ENCODE measurements at regions of chr7 and their contacts with region 1.

Region 1: DNA sequence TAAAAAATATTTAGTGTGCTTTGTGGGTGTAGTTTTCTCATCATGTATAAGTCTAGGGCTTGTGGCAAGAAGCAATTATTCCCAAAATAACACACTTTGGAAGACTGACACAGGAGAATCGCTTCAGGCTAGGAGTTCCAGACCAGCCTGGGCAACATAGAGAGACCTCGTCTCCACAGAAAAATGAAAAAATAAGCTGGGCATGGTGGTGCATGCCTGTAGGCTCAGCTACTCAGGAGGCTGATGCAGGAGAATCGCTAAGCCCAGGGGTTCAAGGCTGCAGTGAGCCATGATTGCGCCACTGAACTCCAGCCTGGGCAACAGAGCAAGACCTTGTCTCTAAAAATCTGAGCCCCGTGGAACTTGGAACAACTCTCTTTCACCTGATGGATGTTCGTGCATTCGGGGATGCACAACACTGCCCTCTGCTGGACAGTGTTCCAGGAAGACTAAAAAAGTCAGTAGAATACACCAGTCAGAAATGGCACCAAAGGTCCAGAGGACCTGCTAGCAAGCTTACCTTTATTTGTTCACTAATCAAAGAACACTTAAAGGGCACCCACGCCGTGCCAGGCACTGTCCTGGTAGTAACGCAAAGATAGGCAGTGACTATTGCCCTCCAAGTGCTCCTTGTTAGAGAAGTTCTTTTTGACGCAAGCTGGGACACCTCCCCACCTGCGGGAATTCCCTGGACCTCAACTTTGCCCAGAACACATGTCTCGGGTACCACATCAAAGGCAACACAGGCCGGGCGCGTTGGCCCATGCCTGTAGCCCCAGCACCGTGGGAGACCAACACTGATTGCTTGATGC is 81.9 kb upstream of the CALN1 start:
- DNase-seq: peak in 7 of 9 donors; percentile 13 to 48 (median 27)
- ATAC-seq: peak; percentile 57
- H3K4me3 ChIP-seq: no peak overlapping the region
- H3K4me3 Mint-ChIP-seq: no peak overlapping the region
- H3K27ac ChIP-seq: no peak overlapping the region
- H3K27ac Mint-ChIP-seq: no peak overlapping the region
- H3K4me1 ChIP-seq: no peaks in the 10 kb centered on the region
- H3K4me1 Mint-ChIP-seq: peaks cover 0 to 2% (median 0%) of the 10 kb centered on the region in 7 donors
- H3K27me3 ChIP-seq: no peaks in the 10 kb centered on the region
- H3K27me3 Mint-ChIP-seq: peaks cover 0 to 11% (median 4%) of the 10 kb centered on the region in 5 donors

Region 2: DNA sequence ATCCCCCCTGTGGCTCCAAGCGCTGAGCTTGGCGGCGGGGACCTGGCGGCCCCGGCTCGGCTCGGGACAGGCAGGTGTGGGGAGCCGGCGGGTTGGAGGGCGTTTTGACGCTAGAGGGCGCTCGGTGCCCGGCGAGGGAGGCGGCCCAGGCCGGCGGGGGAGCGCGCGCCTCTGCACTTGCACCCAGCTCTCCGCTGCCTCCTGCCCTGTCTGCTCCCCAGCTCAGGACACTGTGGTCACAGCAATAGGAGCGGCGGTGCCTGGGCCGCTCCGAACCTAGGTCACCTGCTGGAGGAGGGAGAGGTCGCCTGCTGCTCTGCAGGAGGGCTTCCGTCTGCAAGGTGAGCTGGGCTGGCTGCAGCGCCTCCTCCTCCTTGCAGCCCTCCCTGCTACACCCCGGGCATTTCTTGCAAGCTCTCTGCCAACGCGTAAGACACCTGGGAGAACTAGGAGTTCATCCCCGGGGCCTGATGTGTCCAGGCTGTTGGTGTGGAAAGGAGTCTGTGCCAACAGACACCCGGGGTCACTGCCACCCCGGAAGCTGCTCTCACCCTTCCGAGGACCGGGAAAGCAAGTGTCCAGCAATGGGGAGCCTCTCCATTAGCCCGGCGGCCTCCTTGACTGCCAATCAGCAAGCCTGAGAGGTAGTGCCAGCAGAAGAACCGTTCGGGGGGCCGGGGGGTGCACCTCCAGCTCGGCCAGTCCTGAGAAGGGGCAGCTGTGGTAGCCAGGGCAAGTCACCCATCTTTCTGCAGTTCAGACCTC is 741.7 kb before region 1 on chr7:
- CTCF ChIA-PET with region 1: no interaction called
- POLR2A ChIA-PET with region 1: no interaction called
- intact Hi-C with region 1: loop called in 1 of 2 experiments (anchors 5 kb)
- DNase-seq: peak in 5 of 9 donors; percentile 15 to 50 (median 23)
- ATAC-seq: peak; percentile 48
- H3K4me3 ChIP-seq: no peak overlapping the region
- H3K4me3 Mint-ChIP-seq: no peak overlapping the region
- H3K27ac ChIP-seq: no peak overlapping the region
- H3K27ac Mint-ChIP-seq: no peak overlapping the region
- H3K4me1 ChIP-seq: no peaks in the 10 kb centered on the region
- H3K4me1 Mint-ChIP-seq: peaks cover 0 to 6% (median 0%) of the 10 kb centered on the region in 7 donors
- H3K27me3 ChIP-seq: no peaks in the 10 kb centered on the region
- H3K27me3 Mint-ChIP-seq: peaks cover 0 to 38% (median 28%) of the 10 kb centered on the region in 5 donors